ENCODE measurements at regions of chr14 and their contacts with region 1.

Region 1: DNA sequence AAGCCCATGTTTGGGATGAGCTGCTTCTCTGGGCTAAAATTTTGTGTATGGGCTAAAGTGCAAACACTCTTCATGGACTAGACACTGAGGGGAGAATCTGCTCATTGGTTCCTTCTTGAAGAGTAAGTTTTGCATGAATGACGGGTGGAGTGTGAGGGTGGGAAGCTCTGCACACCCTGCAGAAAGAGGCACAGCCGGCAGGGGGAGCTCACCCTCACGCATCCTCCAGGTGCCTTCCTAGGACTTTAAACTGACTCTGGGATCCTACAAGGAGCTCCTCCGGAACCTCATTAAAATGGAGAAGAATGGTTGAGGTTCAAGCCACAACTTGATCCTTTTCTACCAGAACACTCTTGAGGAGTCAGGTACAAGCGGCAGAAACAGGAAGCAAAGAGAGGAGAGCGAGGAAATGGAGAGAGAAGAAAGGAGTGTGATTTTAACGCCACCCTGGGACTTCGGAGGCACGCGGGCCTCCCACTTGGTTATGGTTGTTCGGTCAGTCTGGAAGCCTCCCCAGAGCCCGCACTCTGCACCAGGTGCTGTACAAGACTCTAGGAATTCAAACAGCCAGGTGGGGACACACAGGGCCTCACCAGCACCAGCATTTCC is 87.5 kb downstream of the SETD3 start:
- DNase-seq: peak; percentile 74
- ATAC-seq: peak; percentile 71
- H3K4me3 Mint-ChIP-seq: no peak overlapping the region
- H3K27ac Mint-ChIP-seq: peak overlapping the region; percentile 92; the same call in 1 of the 2 replicates
- H3K4me1 Mint-ChIP-seq: peaks cover 37% of the 10 kb centered on the region
- H3K27me3 Mint-ChIP-seq: no peaks in the 10 kb centered on the region
- CTCF ChIP-seq: peak; percentile 89

Region 2: GRCh38 chr14:99148861-99149610 is 244.1 kb before region 1 on chr14:
- CTCF ChIA-PET with region 1: no interaction called
- POLR2A ChIA-PET with region 1: no interaction called
- DNase-seq: no peak
- ATAC-seq: no peak
- H3K4me3 Mint-ChIP-seq: no peak overlapping the region
- H3K27ac Mint-ChIP-seq: no peak overlapping the region
- H3K4me1 Mint-ChIP-seq: peaks cover 11% of the 10 kb centered on the region
- H3K27me3 Mint-ChIP-seq: no peaks in the 10 kb centered on the region
- CTCF ChIP-seq: no peak

Region 3: GRCh38 chr14:99252940-99253868 is 139.9 kb before region 1 on chr14:
- CTCF ChIA-PET with region 1: no interaction called
- POLR2A ChIA-PET with region 1: no interaction called
- DNase-seq: no peak
- ATAC-seq: no peak
- H3K4me3 Mint-ChIP-seq: no peak overlapping the region
- H3K27ac Mint-ChIP-seq: no peak overlapping the region; the same call in 1 of the 2 replicates
- H3K4me1 Mint-ChIP-seq: peaks cover 57% of the 10 kb centered on the region
- H3K27me3 Mint-ChIP-seq: no peaks in the 10 kb centered on the region
- CTCF ChIP-seq: no peak

Region 4: GRCh38 chr14:99284254-99285004 is 108.7 kb before region 1 on chr14:
- CTCF ChIA-PET with region 1: interaction called, 11 read pairs
- POLR2A ChIA-PET with region 1: no interaction called
- DNase-seq: no peak
- ATAC-seq: peak; percentile 77
- H3K4me3 Mint-ChIP-seq: no peak overlapping the region
- H3K27ac Mint-ChIP-seq: no peak overlapping the region
- H3K4me1 Mint-ChIP-seq: peaks cover 12% of the 10 kb centered on the region
- H3K27me3 Mint-ChIP-seq: no peaks in the 10 kb centered on the region
- CTCF ChIP-seq: no peak

Region 5: DNA sequence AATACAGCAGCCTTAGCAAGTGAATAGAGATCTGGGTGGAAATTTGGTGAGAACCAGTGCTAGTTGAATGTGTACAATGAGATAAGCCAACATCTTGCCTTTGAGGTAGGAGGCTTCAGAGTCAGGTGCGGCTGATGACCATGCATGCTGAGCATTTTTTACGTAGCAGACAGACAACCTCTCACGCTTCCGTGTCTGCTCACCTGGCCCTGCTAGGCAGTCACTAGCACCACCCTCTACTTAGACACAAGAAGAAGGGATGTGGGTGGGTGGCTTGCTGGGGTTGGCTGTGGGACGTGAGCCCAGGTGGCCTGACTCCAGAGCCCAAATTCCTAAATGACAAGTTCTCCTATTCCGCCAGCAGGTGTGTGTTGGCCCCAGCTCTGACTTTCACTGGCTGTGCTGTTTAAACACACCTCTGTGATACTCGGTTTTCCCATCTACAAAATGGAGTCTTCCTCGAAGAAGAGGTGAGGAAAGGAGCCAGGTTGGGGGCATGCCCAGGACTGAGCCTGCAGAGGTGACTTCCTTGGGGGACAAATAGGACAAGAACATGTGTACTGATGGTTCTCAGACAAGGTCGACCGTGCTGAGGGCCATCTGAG is 63.3 kb before region 1 on chr14:
- CTCF ChIA-PET with region 1: interaction called, 12 read pairs
- POLR2A ChIA-PET with region 1: no interaction called
- DNase-seq: no peak
- ATAC-seq: no peak
- H3K4me3 Mint-ChIP-seq: no peak overlapping the region
- H3K27ac Mint-ChIP-seq: peak overlapping the region; percentile 41; the same call in 1 of the 2 replicates
- H3K4me1 Mint-ChIP-seq: 0 out of 2 replicates have a peak, but pooled peaks cover 2% of the 10 kb centered on the region
- H3K27me3 Mint-ChIP-seq: no peaks in the 10 kb centered on the region; the same call in none of the 2 replicates
- CTCF ChIP-seq: no peak

Region 6: GRCh38 chr14:99360774-99361595 is 32.2 kb before region 1 on chr14:
- CTCF ChIA-PET with region 1: interaction called, 10 read pairs
- POLR2A ChIA-PET with region 1: no interaction called
- DNase-seq: no peak
- ATAC-seq: no peak
- H3K4me3 Mint-ChIP-seq: no peak overlapping the region
- H3K27ac Mint-ChIP-seq: no peak overlapping the region
- H3K4me1 Mint-ChIP-seq: peaks cover 23% of the 10 kb centered on the region
- H3K27me3 Mint-ChIP-seq: peaks cover 7% of the 10 kb centered on the region; the same call in 1 of the 2 replicates
- CTCF ChIP-seq: no peak

Region 7: DNA sequence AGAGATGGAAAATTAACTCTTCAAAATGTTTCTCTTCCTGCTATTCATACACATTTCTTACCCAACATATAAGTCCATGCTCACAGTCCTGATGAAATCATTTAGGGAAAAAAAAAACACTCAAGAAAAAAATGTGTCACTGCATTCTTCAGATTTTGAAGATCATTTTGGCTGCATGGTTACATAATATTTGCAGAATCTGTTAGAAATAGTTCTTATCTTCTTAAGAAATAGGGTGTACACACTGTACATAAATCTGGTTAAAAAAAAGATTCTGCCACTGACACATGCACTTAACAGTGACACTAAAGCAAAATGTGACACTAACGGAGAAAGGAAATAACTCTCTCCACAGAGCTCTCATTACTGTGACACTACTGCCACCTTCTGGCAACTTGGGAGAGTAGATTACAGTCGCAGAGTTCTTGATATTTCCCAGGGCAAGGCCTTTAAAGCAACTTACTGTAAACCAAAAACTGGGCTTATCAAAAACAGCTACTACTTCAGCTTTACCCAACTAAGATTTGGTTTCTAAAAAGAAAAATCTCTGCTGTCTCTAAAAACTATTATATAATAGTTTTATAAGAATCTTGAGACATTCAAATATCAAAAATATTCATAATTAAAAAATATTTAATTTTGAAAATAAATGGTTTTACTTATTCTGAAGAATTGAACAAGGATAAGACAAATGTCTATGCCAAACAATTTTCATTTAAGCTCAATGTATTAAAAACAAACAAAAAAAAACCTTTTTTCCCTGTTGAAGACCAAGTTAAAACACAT is 22.5 kb after region 1 on chr14:
- CTCF ChIA-PET with region 1: interaction called, 416 read pairs
- POLR2A ChIA-PET with region 1: interaction called, 4 read pairs
- DNase-seq: peak; percentile 52
- ATAC-seq: peak; percentile 35
- H3K4me3 Mint-ChIP-seq: peak overlapping the region; percentile 8
- H3K27ac Mint-ChIP-seq: peak overlapping the region; percentile 16
- H3K4me1 Mint-ChIP-seq: peaks cover 61% of the 10 kb centered on the region
- H3K27me3 Mint-ChIP-seq: no peaks in the 10 kb centered on the region
- CTCF ChIP-seq: peak; percentile 70

Region 8: DNA sequence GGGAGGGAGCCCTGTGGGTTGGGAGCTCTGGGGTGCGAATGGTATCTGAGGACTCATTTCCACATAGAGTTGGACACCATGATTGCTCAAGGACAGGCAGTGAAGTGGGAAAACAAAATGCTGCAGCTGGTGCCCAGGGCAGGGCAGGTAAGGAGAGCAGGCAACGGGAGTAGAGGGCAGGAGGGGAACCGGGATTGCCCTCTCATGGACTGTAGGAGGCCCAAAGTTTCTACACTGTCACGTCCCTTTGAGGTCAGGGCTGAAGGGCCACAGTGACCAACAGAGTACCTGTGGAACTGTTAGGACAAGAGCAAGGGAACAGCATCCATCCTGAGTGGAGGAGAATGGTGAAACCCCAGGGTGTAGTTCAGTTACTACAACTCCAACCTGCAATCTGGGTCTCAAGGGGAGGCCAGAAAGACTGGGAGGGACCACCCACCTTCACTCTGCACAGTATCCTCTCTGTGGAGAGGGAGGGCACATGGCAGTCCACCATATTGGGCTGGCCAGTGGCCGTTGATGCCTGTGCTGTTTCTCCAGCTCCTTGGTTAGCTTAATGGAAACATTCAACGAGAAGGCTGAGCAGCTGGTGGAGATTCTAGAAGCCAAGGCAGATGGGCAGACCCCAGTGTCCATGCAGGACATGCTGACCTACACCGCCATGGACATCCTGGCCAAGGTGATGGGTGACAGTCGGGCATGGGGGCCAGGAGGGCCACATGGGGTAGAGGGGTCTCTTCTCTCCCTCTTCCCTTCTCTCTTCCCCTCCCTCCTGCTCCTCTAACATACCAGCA is 313.2 kb after region 1 on chr14:
- CTCF ChIA-PET with region 1: no interaction called
- POLR2A ChIA-PET with region 1: no interaction called
- DNase-seq: no peak
- ATAC-seq: no peak
- H3K4me3 Mint-ChIP-seq: no peak overlapping the region
- H3K27ac Mint-ChIP-seq: no peak overlapping the region
- H3K4me1 Mint-ChIP-seq: no peaks in the 10 kb centered on the region
- H3K27me3 Mint-ChIP-seq: peaks cover 3% of the 10 kb centered on the region
- CTCF ChIP-seq: no peak